ENCODE measurements at regions of chr11 and their contacts with region 1.

Region 1: GRCh38 chr11:94623120-94623735 is 56.1 kb downstream of the PIWIL4 start:
- DNase-seq: peak; percentile 86
- H3K4me3 Mint-ChIP-seq: no peak overlapping the region
- H3K27ac Mint-ChIP-seq: no peak overlapping the region
- H3K4me1 Mint-ChIP-seq: peaks cover 6% of the 10 kb centered on the region
- H3K27me3 Mint-ChIP-seq: no peaks in the 10 kb centered on the region
- CTCF ChIP-seq: peak; percentile 81

Region 2: DNA sequence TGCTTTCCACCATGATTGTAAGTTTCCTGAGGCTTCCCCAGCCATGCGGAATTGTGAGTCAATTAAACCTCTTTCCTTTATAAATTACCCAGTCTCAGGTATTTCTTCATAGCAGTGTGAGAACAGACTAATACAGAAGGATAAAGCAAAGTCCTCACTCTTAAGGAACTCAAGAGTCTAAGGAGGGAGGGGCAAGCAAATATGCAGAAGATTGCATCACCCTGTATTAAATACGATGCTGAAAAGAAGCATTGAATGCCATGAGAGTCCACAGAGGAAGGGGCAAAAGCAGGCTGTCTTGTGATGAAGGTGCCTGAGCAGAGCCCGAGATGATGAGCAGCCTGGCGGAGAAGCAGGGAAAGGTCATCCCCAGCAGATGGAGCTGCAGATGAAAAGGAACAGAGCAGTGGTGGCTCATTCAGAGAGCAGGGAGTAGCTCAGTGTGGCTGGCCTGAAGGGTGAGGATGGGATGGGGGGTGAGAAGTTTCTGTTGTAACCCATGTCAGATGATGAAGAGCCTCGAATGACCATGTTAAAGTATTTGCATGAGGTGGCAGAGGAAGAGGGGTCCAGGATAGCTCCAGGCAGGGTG is 325.1 kb before region 1 on chr11:
- CTCF ChIA-PET with region 1: no interaction called
- POLR2A ChIA-PET with region 1: no interaction called
- intact Hi-C with region 1: no loop called
- DNase-seq: no peak
- H3K4me3 Mint-ChIP-seq: no peak overlapping the region
- H3K27ac Mint-ChIP-seq: no peak overlapping the region
- H3K4me1 Mint-ChIP-seq: no peaks in the 10 kb centered on the region
- H3K27me3 Mint-ChIP-seq: peaks cover 35% of the 10 kb centered on the region
- CTCF ChIP-seq: no peak

Region 3: DNA sequence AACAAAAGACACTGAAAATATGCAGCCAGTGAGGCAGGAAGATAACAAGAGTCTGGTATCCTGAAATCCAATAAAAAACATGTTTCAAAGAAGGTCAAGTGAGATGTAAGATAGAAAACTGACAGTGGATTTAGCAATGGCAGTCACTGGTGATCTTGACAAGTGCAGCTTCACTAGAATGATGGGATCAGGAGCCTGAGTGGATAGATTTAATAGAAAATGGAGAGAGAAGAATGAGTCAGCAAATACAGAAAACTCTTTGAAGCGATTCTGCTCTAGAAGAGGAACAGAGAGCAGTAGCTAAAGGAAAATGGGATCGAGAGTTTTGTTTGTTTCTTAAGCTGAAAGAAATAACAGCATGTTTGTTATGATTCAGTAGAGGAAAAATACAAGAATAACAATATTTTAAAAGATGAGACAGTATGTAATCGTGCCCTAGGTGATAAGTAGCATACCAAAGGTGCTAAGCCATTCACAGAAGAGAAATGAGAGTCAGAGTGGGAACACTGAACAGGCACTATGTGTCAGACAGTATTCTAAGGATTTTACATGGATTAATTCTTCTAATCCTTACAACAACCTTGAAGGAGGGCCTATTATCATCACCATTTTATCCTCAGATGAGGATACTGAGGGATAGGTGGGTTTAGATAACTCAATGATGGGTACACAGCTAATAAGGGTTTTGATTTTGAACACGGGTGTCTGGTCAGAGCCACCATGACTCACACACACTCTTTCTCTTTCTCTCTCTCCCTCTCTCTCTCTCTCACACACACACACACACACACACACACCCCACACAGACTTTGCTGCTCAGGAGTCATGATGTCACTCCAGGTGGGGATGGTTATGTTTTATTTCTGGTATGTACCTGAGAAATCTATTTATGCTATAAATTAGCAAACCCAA is 165.9 kb before region 1 on chr11:
- CTCF ChIA-PET with region 1: no interaction called
- POLR2A ChIA-PET with region 1: no interaction called
- intact Hi-C with region 1: no loop called
- DNase-seq: no peak
- H3K4me3 Mint-ChIP-seq: no peak overlapping the region
- H3K27ac Mint-ChIP-seq: no peak overlapping the region
- H3K4me1 Mint-ChIP-seq: no peaks in the 10 kb centered on the region
- H3K27me3 Mint-ChIP-seq: no peaks in the 10 kb centered on the region
- CTCF ChIP-seq: no peak

Region 4: DNA sequence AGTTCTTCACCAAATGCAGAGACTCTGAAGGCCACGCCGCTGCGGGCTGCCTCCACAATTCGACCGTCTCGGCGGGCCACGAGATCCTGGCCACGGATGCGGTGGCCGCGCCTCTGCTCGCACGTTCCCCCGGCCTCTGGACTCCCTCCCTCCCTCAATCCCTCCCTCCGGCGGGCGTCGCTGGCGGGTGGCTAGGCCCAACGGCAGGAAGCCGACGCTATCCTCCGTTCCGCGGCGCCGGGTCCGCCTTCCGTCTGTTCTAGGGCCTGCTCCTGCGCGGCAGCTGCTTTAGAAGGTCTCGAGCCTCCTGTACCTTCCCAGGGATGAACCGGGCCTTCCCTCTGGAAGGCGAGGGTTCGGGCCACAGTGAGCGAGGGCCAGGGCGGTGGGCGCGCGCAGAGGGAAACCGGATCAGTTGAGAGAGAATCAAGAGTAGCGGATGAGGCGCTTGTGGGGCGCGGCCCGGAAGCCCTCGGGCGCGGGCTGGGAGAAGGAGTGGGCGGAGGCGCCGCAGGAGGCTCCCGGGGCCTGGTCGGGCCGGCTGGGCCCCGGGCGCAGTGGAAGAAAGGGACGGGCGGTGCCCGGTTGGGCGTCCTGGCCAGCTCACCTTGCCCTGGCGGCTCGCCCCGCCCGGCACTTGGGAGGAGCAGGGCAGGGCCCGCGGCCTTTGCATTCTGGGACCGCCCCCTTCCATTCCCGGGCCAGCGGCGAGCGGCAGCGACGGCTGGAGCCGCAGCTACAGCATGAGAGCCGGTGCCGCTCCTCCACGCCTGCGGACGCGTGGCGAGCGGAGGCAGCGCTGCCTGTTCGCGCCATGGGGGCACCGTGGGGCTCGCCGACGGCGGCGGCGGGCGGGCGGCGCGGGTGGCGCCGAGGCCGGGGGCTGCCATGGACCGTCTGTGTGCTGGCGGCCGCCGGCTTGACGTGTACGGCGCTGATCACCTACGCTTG is 79.3 kb before region 1 on chr11 and contains the start of gene FUT4:
- CTCF ChIA-PET with region 1: no interaction called
- POLR2A ChIA-PET with region 1: no interaction called
- intact Hi-C with region 1: no loop called
- DNase-seq: peak; percentile 85
- H3K4me3 Mint-ChIP-seq: peak within 1 kb of the TSS; percentile 66
- H3K27ac Mint-ChIP-seq: no peak within 1 kb of the TSS
- H3K4me1 Mint-ChIP-seq: peaks cover 10% of the 10 kb centered on the region
- H3K27me3 Mint-ChIP-seq: no peaks in the 10 kb centered on the region
- CTCF ChIP-seq: no peak
- total RNA-seq, gene FUT4: 0.23 and 0.32 TPM in 2 replicates

Region 5: DNA sequence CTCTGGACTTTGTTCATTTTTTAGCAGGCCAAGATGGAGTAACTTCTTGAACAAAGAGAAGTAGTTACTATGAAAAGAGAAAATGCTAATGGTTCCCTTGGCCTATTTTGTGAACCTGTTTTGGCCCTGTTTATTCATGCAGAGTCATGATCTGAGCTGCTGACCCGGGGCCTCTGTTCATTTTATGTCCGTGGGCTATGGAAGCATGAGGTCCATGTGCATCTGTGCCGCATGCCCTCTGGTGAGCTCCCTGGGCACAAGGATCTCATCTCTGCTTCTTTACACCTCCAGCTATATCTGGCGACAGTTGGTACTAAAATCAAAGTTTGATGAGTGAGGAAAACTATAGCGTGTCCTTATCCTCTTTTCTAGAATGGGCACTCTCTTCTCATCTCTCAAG is 55.0 kb before region 1 on chr11:
- CTCF ChIA-PET with region 1: no interaction called
- POLR2A ChIA-PET with region 1: no interaction called
- intact Hi-C with region 1: no loop called
- DNase-seq: no peak
- H3K4me3 Mint-ChIP-seq: no peak overlapping the region
- H3K27ac Mint-ChIP-seq: no peak overlapping the region
- H3K4me1 Mint-ChIP-seq: peaks cover 2% of the 10 kb centered on the region
- H3K27me3 Mint-ChIP-seq: no peaks in the 10 kb centered on the region
- CTCF ChIP-seq: no peak

Region 6: GRCh38 chr11:94705896-94706615 is 82.8 kb after region 1 on chr11:
- CTCF ChIA-PET with region 1: interaction called, 56 read pairs
- POLR2A ChIA-PET with region 1: interaction called, 27 read pairs
- intact Hi-C with region 1: loop called (anchors 1 kb)
- DNase-seq: peak; percentile 83
- H3K4me3 Mint-ChIP-seq: peak overlapping the region; percentile 81
- H3K27ac Mint-ChIP-seq: peak overlapping the region; percentile 95
- H3K4me1 Mint-ChIP-seq: peaks cover 18% of the 10 kb centered on the region
- H3K27me3 Mint-ChIP-seq: no peaks in the 10 kb centered on the region
- CTCF ChIP-seq: no peak

Region 7: DNA sequence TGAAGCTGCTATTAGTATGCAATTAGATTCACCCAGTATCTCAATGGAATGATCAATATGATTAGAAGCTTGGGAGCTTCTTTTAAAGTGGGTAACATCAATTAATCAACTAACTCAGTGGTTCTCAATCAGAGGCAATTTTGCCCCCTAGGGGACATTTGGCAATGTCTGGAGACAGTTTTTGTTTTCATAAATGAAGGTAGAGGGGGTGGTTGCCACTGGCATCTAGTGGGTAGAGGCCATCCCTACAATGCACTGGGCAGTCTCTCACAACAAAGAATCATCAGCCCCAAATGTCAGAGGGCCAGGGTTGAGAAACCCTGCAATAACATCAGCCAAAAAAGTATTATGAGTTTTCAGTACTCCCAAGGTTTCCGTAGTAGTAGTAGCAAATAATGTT is 139.0 kb after region 1 on chr11:
- CTCF ChIA-PET with region 1: interaction called, 25 read pairs
- POLR2A ChIA-PET with region 1: no interaction called
- intact Hi-C with region 1: loop called (anchors 1 kb)
- DNase-seq: peak; percentile 71
- H3K4me3 Mint-ChIP-seq: no peak overlapping the region
- H3K27ac Mint-ChIP-seq: no peak overlapping the region
- H3K4me1 Mint-ChIP-seq: no peaks in the 10 kb centered on the region
- H3K27me3 Mint-ChIP-seq: no peaks in the 10 kb centered on the region
- CTCF ChIP-seq: peak; percentile 58

Region 8: GRCh38 chr11:94820480-94820879 is 197.3 kb after region 1 on chr11:
- CTCF ChIA-PET with region 1: interaction called, 18 read pairs
- POLR2A ChIA-PET with region 1: interaction called, 4 read pairs
- intact Hi-C with region 1: no loop called
- DNase-seq: no peak
- H3K4me3 Mint-ChIP-seq: no peak overlapping the region
- H3K27ac Mint-ChIP-seq: no peak overlapping the region
- H3K4me1 Mint-ChIP-seq: no peaks in the 10 kb centered on the region
- H3K27me3 Mint-ChIP-seq: no peaks in the 10 kb centered on the region
- CTCF ChIP-seq: no peak

Region 9: GRCh38 chr11:94876645-94877442 is 253.6 kb after region 1 on chr11:
- CTCF ChIA-PET with region 1: interaction called, 13 read pairs
- POLR2A ChIA-PET with region 1: no interaction called
- intact Hi-C with region 1: loop called (anchors 1 kb)
- DNase-seq: peak; percentile 85
- H3K4me3 Mint-ChIP-seq: peak overlapping the region; percentile 1
- H3K27ac Mint-ChIP-seq: peak overlapping the region; percentile 87
- H3K4me1 Mint-ChIP-seq: peaks cover 24% of the 10 kb centered on the region
- H3K27me3 Mint-ChIP-seq: no peaks in the 10 kb centered on the region
- CTCF ChIP-seq: peak; percentile 34

Region 10: DNA sequence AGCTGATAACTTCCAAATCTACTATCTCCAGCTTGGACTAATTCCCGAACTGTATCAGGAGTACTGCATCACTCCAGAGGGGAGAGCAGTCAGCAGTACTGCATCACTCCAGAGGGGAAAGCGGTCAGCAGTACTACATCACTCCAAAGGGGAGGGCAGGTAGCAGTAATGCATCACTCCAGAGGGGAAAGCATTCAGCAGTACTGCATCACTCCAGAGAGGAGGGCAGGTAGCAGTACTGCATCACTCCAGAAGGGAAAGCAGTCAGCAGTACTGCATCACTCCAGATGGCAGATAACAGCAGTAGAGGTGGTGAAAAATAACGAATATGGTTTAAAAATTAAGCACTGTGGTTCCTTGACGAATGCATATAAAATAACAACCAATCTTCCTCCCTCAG is 341.7 kb after region 1 on chr11:
- CTCF ChIA-PET with region 1: interaction called, 74 read pairs
- POLR2A ChIA-PET with region 1: interaction called, 6 read pairs
- intact Hi-C with region 1: loop called (anchors 1 kb)
- DNase-seq: no peak
- H3K4me3 Mint-ChIP-seq: no peak overlapping the region
- H3K27ac Mint-ChIP-seq: no peak overlapping the region
- H3K4me1 Mint-ChIP-seq: peaks cover 6% of the 10 kb centered on the region
- H3K27me3 Mint-ChIP-seq: no peaks in the 10 kb centered on the region
- CTCF ChIP-seq: no peak